ENCODE measurements at regions of chr2 and their contacts with region 1.

Region 1: DNA sequence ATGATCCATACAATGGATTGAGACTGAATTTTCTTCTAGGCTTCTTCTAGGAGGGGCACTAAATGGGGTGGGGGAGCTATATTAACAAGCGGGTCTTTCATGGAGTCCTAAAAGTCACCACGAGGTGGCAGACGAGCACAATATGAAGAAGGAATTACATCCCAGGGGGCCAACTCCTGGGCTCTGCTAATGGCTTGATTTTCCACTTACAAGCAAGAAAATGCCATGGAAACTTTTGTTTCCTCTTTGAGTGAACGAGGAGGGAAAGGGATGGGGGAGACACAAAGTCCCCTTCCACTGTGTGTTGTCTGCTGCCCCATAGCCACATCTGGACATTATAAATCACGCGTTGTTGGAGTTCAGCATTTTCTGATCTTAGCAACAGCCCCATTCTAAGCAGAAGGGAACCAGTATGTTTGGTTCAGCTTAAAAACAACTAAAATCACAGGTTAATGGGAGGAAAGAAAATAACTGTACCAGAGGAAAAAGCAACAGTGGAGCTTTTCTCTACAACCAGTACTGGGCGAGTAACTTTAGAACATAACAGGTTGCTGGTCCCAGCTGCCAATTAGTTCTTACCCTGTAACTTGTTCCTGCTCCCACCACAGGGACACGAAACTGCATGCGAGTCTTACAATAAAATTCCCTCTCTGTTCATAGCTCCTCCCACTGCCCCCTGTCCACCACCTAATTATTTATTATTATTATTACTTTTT is 285.0 kb upstream of the PARD3B start:
- DNase-seq: peak in 7 of 10 donors; percentile 22 to 88 (median 68)

Region 2: DNA sequence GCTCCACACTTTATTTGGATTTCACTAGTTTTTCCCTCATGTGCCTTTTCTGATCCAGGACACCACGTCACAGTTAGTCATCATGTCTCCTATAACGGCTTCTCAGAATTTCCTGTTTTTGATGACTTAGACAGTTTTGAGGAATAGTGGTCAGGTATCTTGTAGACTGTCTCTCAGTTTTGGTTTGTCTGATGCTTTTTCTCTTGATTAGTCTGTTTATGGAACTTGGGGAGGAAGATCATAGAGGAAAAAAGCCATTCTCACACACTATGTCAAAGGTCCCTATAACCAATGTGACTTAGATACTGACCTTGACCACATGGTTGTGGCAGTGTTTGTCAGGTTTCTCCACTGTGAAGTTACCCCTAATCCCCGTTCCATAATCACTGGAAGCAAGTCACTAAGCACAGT is 814.2 kb before region 1 on chr2:
- intact Hi-C with region 1: no loop called
- DNase-seq: no peak

Region 3: DNA sequence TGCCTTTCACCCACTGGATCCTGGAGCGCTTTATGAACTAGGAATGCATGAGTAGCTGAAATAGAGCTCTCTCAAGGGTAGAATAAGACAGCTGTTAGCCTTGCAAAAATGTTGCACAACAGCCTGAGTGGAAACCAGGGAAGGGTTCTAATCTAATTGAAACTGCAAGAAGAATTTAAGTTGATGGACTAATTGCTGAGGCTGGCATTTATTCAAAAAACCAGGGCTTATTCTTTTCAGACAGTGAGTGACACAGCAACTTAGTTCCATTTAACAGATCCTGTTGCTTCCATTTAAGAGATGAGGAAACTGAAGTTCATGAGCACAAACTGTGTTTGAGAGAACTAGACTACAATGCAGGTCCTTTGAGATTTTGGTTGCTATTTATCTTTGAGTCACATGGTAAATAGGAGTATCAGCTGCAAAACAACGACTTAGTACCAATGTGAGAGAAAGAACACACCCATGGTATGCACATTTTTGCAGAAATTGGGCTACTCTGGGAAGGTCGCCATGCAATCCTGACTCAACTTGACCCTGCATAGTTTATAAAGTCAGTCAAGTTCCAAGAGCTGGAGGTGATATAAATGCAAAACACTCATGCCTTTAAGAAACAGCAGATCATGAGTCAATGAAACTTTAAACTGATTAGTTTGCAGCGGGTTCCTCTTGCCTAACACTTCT is 208.6 kb after region 1 on chr2:
- intact Hi-C with region 1: no loop called
- DNase-seq: no peak

Region 4: DNA sequence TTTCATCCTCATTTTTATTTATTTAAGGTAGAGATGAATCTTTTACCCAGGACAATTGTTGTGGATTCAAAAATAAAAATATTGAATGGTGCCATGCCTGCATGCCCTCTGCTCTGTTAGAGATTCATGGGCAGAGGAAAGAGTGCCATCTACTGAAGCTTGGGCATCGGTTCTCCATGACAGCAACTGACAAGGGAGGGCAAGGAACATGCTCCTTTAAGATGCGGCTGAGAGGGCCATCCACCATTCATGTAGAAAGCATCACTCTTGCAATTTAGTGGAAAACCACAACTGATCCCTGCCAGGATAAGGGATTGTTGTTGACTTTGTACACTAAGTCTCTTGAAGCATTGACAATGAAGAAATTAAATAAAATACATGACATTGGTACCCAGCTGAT is 364.8 kb after region 1 on chr2:
- intact Hi-C with region 1: loop called (anchors 1 kb)
- DNase-seq: peak in 5 of 10 donors; percentile 8 to 80 (median 35)

Region 5: GRCh38 chr2:204691911-204692510 is 431.7 kb after region 1 on chr2:
- intact Hi-C with region 1: loop called (anchors 10 kb)
- DNase-seq: peak in 1 of 10 donors; percentile 16

Region 6: DNA sequence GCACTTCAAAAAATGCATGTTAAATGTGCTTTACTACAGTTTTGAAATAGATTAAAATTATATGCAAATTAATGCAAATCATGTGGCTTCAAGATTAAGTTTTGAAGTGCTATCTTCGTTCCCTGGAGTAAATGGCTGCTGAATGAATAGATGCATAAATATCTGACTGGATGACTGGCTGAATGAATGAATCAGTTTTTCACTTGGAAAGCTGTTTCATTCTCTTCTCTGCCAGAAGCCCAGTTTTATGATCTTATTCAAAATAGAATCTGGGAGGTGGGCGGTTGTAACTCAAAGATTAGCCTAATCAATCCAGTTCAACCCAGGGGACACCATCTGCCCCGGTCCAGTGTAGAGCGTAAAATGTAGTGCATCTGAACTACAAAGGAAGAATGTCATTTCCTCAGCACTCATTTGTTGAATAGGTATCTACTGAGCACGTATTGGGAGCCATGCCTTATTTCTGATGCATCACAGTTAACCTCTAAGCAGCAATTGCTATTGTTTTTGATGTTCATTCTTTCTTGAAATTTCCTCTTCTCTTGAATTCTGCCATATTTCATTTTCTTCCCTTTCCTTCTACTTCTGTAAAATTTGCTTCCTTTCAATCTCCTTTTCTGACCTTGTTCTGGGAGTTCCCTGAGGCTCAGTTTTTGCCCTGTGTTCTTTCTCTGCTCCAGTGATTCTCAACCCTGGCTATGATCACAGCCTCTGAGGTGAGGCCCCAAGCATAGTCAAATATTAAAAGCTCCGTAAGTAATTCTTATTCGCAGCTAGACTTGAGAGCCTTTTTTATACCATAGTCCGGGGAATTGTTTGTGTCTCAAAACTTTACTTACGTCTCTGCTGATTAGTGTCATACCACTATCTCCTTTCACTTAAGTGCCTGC is 567.6 kb after region 1 on chr2:
- intact Hi-C with region 1: no loop called
- DNase-seq: no peak